ENCODE measurements at regions of chr14 and their contacts with region 1.

Region 1: DNA sequence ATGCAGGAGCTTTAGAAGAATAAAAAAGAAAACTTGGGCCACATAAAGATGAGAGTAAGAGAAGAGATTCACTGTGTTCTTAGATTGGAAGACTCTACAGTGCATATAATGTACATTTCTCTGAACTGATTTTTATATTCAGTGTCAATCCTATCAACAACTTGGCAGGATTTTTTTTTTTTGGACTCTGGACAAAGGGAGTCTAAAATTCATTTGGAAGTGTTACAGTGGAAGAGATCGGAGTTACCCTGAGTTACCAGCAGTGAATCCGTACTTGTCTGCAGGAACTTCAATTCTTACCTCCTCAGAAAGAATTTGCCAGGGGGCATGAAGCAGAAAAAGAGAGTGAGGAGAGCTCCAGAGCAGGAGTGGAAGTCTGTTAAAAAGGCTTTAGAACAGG is 24.0 kb downstream of the SERPINA11 start:
- DNase-seq: no peak
- ATAC-seq: no peak
- H3K4me3 Mint-ChIP-seq: no peak overlapping the region
- H3K27ac Mint-ChIP-seq: no peak overlapping the region
- H3K4me1 Mint-ChIP-seq: peaks cover 19% of the 10 kb centered on the region
- H3K27me3 Mint-ChIP-seq: no peaks in the 10 kb centered on the region
- CTCF ChIP-seq: no peak

Region 2: GRCh38 chr14:94451091-94451771 is 22.6 kb after region 1 on chr14:
- CTCF ChIA-PET with region 1: interaction called, 18 read pairs
- POLR2A ChIA-PET with region 1: no interaction called
- DNase-seq: peak; percentile 58
- ATAC-seq: peak; percentile 85
- H3K4me3 Mint-ChIP-seq: peak overlapping the region; percentile 20
- H3K27ac Mint-ChIP-seq: peak overlapping the region; percentile 65
- H3K4me1 Mint-ChIP-seq: peaks cover 51% of the 10 kb centered on the region
- H3K27me3 Mint-ChIP-seq: peaks cover 7% of the 10 kb centered on the region
- CTCF ChIP-seq: no peak

Region 3: GRCh38 chr14:94474581-94475031 is 46.0 kb after region 1 on chr14:
- CTCF ChIA-PET with region 1: interaction called, 12 read pairs
- POLR2A ChIA-PET with region 1: interaction called, 4 read pairs
- DNase-seq: no peak
- ATAC-seq: peak; percentile 82
- H3K4me3 Mint-ChIP-seq: no peak overlapping the region
- H3K27ac Mint-ChIP-seq: no peak overlapping the region
- H3K4me1 Mint-ChIP-seq: no peaks in the 10 kb centered on the region
- H3K27me3 Mint-ChIP-seq: peaks cover 7% of the 10 kb centered on the region; the same call in 1 of the 2 replicates
- CTCF ChIP-seq: no peak

Region 4: GRCh38 chr14:94509356-94509755 is 80.7 kb after region 1 on chr14 and contains the start of gene SERPINA12:
- CTCF ChIA-PET with region 1: interaction called, 10 read pairs
- POLR2A ChIA-PET with region 1: no interaction called
- DNase-seq: no peak
- ATAC-seq: no peak
- H3K4me3 Mint-ChIP-seq: no peak within 1 kb of the TSS
- H3K27ac Mint-ChIP-seq: no peak within 1 kb of the TSS
- H3K4me1 Mint-ChIP-seq: no peaks in the 10 kb centered on the region
- H3K27me3 Mint-ChIP-seq: no peaks in the 10 kb centered on the region
- CTCF ChIP-seq: no peak
- total RNA-seq, gene SERPINA12: not detected in 3 replicates

Measured in WTC11 (cell line).